Lower leg skin (tissue), 4 donors: ENCODE measurements at regions of chr6 and their contacts with region 1.

Region 1: GRCh38 chr6:46367354-46368168 is 123.7 kb downstream of the RCAN2 start:
- DNase-seq: no peak
- H3K4me3 ChIP-seq: no peak overlapping the region
- CTCF ChIP-seq: no peak
- POLR2A ChIP-seq: no peak

Region 2: GRCh38 chr6:44966449-44967092 is 1401.0 kb before region 1 on chr6:
- intact Hi-C with region 1: no loop called
- DNase-seq: no peak
- H3K4me3 ChIP-seq: no peak overlapping the region
- CTCF ChIP-seq: no peak
- POLR2A ChIP-seq: no peak

Region 3: DNA sequence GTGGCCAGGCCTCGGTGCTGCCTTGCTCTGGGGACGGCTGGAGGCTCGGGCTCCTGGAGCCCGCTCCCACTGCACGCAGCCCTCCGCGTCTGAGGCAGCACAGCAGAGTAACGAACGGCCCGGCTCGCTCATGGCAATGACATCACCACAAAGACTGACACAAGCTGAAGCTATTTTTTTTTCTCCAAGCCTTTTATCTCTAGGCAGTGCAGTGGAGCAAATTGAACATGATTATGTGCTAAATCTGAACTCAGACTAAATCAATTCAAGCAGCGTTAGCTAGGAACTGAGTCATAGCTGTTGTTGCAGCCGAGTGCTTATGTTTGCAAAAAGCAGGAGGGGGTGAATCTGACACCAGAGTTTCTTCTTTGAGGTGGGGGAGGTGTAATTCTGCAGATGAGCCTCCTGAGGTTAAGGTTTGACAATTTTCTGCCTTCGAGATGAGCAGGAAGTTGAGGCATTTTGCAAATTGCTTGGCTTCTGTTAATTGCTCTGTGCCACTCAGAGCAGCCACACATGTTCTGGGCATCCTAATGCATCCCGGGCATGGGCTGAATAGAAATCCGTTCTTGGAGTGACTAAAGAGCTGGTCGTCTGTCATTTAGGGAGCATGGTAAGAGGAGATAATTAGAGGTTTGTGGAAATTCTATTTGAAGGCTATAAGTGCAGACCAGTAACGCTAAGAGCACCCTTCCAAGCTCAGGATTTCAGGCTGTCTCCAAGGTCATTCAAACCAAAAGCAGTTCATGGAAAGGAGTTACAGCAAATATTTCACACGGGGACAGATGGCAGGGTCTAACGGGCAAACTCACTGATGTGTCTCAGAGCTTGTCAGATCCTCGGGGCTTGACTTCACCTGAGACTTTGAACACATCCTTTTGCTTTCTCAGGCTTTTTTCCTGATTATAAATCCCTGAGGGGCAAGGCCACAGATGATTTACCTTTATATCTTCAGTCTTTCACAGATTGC is 41.7 kb before region 1 on chr6:
- intact Hi-C with region 1: loop called (anchors 1 kb)
- DNase-seq: no peak
- H3K4me3 ChIP-seq: no peak overlapping the region
- CTCF ChIP-seq: no peak
- POLR2A ChIP-seq: no peak

Region 4: DNA sequence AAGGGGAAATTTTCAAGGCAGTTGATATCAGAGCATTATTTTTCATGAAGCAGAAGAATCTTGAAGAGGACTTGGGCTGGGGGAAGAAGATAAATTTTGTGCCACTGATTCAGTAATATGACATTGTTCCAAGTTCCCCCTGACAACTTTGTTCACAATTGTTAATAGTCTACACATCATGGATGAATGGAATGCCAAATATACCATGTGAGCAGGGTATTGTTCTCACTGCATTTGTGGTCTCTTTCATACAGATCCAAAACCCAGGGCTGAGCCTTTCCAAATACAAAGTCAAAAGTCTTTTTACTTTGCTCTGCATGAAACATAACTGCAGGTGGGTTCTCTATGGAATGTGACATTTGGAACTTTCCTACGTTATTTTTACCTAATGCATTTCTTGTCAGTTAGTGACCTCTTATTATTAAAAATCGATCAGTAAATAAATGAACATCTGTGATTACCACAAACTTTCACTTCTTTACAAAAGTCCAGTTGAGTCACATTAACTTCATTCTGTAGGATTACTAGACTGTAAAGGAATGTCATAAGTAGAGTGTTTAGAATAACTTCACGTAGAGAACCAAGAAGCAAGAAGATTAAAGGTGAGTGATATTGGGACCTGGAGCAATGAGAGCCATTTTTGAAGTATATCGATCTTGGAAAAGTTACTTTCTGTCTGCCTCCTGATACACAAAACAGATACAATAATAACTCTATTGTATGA is 22.8 kb after region 1 on chr6:
- intact Hi-C with region 1: no loop called
- DNase-seq: no peak
- H3K4me3 ChIP-seq: no peak overlapping the region
- CTCF ChIP-seq: no peak
- POLR2A ChIP-seq: no peak